B cell (primary cell): ENCODE measurements at regions of chr2 and their contacts with region 1.

Region 1: DNA sequence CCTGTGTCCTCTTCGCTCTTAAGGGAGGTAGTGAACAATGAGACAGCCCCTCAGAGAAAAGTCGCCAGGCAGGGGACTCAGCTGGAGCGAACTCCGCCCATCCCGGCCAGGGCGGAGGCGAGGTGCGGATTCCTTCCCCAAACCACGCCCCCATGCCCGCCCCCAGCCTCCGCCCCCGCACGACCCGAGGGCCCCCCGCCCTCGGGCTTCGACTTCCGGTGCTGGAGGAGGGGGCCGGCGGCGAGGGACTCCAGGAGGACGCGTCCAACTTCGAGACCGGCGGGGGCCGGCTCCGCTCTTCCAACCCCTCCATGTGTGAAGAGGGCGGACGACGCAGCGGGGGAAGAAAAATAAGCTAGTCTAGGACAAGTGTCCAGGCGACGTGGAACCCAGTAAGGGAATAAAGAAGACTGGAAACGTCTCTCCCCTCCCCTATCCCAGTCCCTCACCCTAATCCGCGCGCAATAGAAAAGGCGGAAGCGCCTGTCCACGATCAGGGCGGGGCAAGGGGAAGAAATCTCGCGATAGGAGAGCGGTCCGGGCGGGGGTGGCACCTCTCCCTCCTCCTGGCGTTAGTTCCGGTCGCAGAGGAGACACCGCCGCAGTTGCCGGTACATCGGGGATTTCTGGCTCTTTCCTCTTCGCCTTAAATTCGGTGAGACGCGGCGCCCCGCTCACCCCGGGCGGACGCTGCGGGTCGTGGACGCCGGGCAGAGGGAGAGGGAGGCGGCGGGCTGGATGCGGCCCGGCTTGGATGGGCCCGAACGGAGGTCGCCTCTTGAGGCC is at the start of gene BZW1:
- DNase-seq: peak; percentile 99
- ATAC-seq: peak; percentile 80
- H3K4me3 ChIP-seq: peak within 1 kb of the TSS; percentile 75 to 93 (median 92)
- H3K4me3 Mint-ChIP-seq: peak within 1 kb of the TSS; percentile 94
- H3K27ac ChIP-seq: peak within 1 kb of the TSS; percentile 99
- H3K27ac Mint-ChIP-seq: peak within 1 kb of the TSS; percentile 99
- H3K4me1 ChIP-seq: peaks cover 19 to 24% of the 10 kb centered on the region in 2 donors
- H3K4me1 Mint-ChIP-seq: peaks cover 39% of the 10 kb centered on the region
- H3K27me3 ChIP-seq: no peaks in the 10 kb centered on the region
- H3K27me3 Mint-ChIP-seq: no peaks in the 10 kb centered on the region
- CTCF ChIP-seq: no peak
- total RNA-seq, gene BZW1: 109 and 120 TPM in 2 replicates

Region 2: DNA sequence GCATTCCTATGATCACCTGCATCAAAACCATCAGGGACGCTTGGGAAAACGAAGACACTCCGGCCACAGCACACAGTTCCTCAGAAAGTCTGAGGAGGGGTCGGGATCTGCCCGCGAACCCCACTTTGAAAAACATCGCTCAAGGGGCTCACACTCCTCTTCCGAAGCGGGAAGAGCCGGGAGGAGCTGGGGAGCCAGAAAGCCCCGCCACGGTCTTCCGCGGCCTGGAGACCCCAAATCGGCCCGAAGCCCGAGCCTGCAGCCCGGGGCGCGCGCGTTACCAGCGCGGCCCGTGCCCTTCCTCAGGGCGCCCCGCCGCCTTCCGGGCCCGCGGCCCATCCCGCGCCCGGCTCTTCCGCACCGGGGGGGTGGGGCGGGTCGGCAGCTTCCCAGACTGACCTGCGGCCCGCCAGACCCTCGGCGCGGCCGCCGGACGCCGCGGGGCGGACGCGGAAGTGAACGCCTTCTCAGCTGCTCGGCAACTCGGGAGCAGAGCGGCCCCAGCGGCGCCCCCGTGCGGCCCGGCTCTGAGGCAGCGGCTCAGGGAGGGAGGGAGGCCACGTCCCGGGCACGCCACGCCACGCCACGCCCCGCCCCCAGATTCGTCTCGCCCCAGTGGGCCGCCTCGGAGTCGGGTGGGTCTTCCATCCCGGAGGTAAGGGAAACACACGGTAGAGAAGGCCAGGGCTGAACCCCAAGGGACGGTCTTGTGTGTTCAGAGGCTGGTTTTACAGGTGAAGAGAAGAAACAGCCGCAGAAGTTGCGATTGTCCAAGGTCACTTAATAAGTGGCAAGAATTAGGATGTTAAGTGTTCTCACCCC is 301.7 kb before region 1 on chr2 and contains the start of gene KCTD18:
- CTCF ChIA-PET with region 1: no interaction called
- POLR2A ChIA-PET with region 1: no interaction called
- intact Hi-C with region 1: loop called (anchors 1 kb)
- DNase-seq: peak; percentile 91
- ATAC-seq: peak; percentile 100
- H3K4me3 ChIP-seq: peak within 1 kb of the TSS; percentile 64 to 81 (median 66)
- H3K4me3 Mint-ChIP-seq: peak within 1 kb of the TSS; percentile 95
- H3K27ac ChIP-seq: peak within 1 kb of the TSS; percentile 49 to 79
- H3K27ac Mint-ChIP-seq: peak within 1 kb of the TSS; percentile 92
- H3K4me1 ChIP-seq: peaks cover 15 to 21% of the 10 kb centered on the region in 2 donors
- H3K4me1 Mint-ChIP-seq: peaks cover 28% of the 10 kb centered on the region
- H3K27me3 ChIP-seq: peaks cover 0 to 13% (median 13%) of the 10 kb centered on the region in 4 experiments
- H3K27me3 Mint-ChIP-seq: peaks cover 4% of the 10 kb centered on the region
- CTCF ChIP-seq: peak; percentile 83
- total RNA-seq, gene KCTD18: 20.2 and 21.3 TPM in 2 replicates

Region 3: GRCh38 chr2:200713003-200713703 is 98.4 kb before region 1 on chr2:
- CTCF ChIA-PET with region 1: interaction called, 11 read pairs
- POLR2A ChIA-PET with region 1: interaction called, 9 read pairs
- intact Hi-C with region 1: loop called (anchors 1 kb)
- DNase-seq: peak; percentile 91
- ATAC-seq: peak; percentile 99
- H3K4me3 ChIP-seq: peak overlapping the region in 4 of 5 experiments; percentile 5 to 52 (median 16)
- H3K4me3 Mint-ChIP-seq: peak overlapping the region; percentile 83
- H3K27ac ChIP-seq: peak overlapping the region; percentile 82 to 93
- H3K27ac Mint-ChIP-seq: peak overlapping the region; percentile 98
- H3K4me1 ChIP-seq: peaks cover 5 to 6% of the 10 kb centered on the region in 2 donors
- H3K4me1 Mint-ChIP-seq: peaks cover 15% of the 10 kb centered on the region
- H3K27me3 ChIP-seq: no peaks in the 10 kb centered on the region
- H3K27me3 Mint-ChIP-seq: peaks cover 10% of the 10 kb centered on the region
- CTCF ChIP-seq: peak; percentile 83

Region 4: GRCh38 chr2:200888704-200889625 is 77.4 kb after region 1 on chr2 and contains the starts of genes NIF3L1 and PPIL3:
- CTCF ChIA-PET with region 1: no interaction called
- POLR2A ChIA-PET with region 1: no interaction called
- intact Hi-C with region 1: loop called (anchors 1 kb)
- DNase-seq: peak; percentile 98
- ATAC-seq: peak; percentile 81
- H3K4me3 ChIP-seq: peak within 1 kb of the TSS; percentile 76 to 99 (median 87)
- H3K4me3 Mint-ChIP-seq: peak within 1 kb of the TSS; percentile 95
- H3K27ac ChIP-seq: peak within 1 kb of the TSS; percentile 90 to 93
- H3K27ac Mint-ChIP-seq: peak within 1 kb of the TSS; percentile 98
- H3K4me1 ChIP-seq: peaks cover 15 to 28% of the 10 kb centered on the region in 2 donors
- H3K4me1 Mint-ChIP-seq: peaks cover 43% of the 10 kb centered on the region
- H3K27me3 ChIP-seq: no peaks in the 10 kb centered on the region
- H3K27me3 Mint-ChIP-seq: no peaks in the 10 kb centered on the region
- CTCF ChIP-seq: no peak
- total RNA-seq, gene NIF3L1: 26.7 and 32.9 TPM in 2 replicates
- total RNA-seq, gene PPIL3: 55.5 and 57.9 TPM in 2 replicates

Region 5: GRCh38 chr2:201006704-201007103 is 195.2 kb after region 1 on chr2:
- CTCF ChIA-PET with region 1: no interaction called
- POLR2A ChIA-PET with region 1: no interaction called
- intact Hi-C with region 1: no loop called
- DNase-seq: no peak
- ATAC-seq: no peak
- H3K4me3 ChIP-seq: no peak overlapping the region
- H3K4me3 Mint-ChIP-seq: no peak overlapping the region
- H3K27ac ChIP-seq: no peak overlapping the region
- H3K27ac Mint-ChIP-seq: no peak overlapping the region
- H3K4me1 ChIP-seq: no peaks in the 10 kb centered on the region
- H3K4me1 Mint-ChIP-seq: no peaks in the 10 kb centered on the region
- H3K27me3 ChIP-seq: no peaks in the 10 kb centered on the region
- H3K27me3 Mint-ChIP-seq: no peaks in the 10 kb centered on the region
- CTCF ChIP-seq: no peak

Region 6: GRCh38 chr2:201118121-201118960 is 306.8 kb after region 1 on chr2:
- CTCF ChIA-PET with region 1: no interaction called
- POLR2A ChIA-PET with region 1: interaction called, 3 read pairs
- intact Hi-C with region 1: loop called (anchors 5 kb)
- DNase-seq: peak; percentile 95
- ATAC-seq: peak; percentile 64
- H3K4me3 ChIP-seq: peak overlapping the region; percentile 66 to 100 (median 97)
- H3K4me3 Mint-ChIP-seq: peak overlapping the region; percentile 98
- H3K27ac ChIP-seq: peak overlapping the region; percentile 94 to 96
- H3K27ac Mint-ChIP-seq: peak overlapping the region; percentile 98
- H3K4me1 ChIP-seq: peaks cover 63 to 72% of the 10 kb centered on the region in 2 donors
- H3K4me1 Mint-ChIP-seq: peaks cover 72% of the 10 kb centered on the region
- H3K27me3 ChIP-seq: no peaks in the 10 kb centered on the region
- H3K27me3 Mint-ChIP-seq: no peaks in the 10 kb centered on the region
- CTCF ChIP-seq: peak; percentile 55

Region 7: DNA sequence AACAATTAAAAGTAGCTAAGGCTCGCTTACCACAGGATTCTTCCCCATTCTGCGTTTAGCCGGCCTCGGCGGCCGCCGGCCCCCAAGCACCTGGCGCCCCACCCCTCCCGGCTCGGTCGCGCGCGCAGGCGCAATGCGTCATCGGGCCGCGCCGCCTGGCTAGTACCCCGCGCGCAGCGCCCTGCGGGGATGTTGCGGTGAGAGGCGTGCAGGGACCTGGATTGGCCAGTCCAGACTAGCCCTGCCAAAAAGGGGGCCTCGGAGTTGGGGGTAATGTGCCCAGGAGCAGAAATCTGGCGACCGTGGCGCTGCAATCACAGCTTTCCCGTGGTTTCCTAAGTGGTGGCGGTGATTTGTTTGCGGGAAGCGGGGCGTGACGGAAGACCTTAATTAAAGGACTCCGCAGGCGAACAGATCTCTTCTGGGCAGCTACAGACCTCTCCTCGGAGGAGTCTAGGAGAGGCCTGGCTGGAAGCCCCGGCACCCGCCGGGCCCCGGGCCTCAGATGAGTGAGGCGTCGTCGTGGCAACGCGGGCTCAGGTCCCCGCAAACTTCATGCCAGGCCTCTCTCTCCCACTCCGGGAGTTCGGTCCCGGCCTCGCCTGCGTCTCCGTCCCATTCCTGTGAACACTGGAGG is 831.2 kb after region 1 on chr2:
- CTCF ChIA-PET with region 1: no interaction called
- POLR2A ChIA-PET with region 1: no interaction called
- intact Hi-C with region 1: loop called (anchors 2 kb)
- DNase-seq: peak; percentile 92
- ATAC-seq: peak; percentile 86
- H3K4me3 ChIP-seq: peak overlapping the region; percentile 73 to 100 (median 95)
- H3K4me3 Mint-ChIP-seq: peak overlapping the region; percentile 96
- H3K27ac ChIP-seq: peak overlapping the region; percentile 89 to 93
- H3K27ac Mint-ChIP-seq: peak overlapping the region; percentile 97
- H3K4me1 ChIP-seq: peaks cover 10 to 14% of the 10 kb centered on the region in 2 donors
- H3K4me1 Mint-ChIP-seq: peaks cover 12% of the 10 kb centered on the region
- H3K27me3 ChIP-seq: peaks cover 0 to 2% (median 0%) of the 10 kb centered on the region in 4 experiments
- H3K27me3 Mint-ChIP-seq: peaks cover 7% of the 10 kb centered on the region
- CTCF ChIP-seq: no peak

Region 8: DNA sequence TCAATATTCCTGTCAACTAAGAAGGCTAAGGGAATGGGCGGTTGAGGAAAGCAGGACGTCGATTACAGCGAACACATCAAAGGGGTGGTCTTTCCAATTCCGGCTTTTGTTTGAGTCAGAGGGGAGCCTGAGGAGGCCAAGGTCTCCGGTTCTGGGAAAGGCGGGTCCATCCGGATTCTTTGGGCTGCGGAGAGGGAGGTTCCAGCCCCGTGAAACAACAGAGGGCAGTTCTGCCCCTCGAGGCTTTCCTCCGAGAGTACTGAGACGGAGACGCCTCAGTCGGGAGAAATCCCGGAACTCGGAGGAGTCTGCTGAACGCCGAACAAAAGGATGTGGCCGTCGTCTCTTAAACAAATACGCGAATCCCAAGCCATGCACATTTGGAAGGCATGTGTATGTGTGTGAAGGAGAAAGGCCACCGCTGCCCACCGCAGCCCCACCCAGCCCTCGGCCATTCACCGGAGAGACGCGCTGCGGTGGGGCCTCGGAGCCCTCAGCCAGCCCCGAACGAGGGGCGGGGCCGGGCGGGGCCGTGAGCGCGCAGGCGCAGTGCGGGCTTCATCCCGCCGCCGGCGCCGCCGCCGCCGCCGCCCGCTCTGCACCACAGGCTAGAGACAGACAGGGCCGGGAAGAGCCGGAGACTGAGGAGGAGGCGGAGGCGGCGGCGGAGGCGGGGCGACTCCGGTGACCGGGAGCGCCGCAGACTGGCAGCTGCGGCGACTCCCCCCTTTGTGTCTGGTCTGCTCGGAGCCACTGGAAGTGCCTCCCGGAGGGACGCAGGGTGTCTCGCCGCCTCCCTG is 1564.3 kb after region 1 on chr2 and contains the start of gene BMPR2:
- CTCF ChIA-PET with region 1: no interaction called
- POLR2A ChIA-PET with region 1: no interaction called
- intact Hi-C with region 1: loop called (anchors 5 kb)
- DNase-seq: peak; percentile 91
- ATAC-seq: peak; percentile 78
- H3K4me3 ChIP-seq: peak within 1 kb of the TSS; percentile 72 to 96 (median 91)
- H3K4me3 Mint-ChIP-seq: peak within 1 kb of the TSS; percentile 98
- H3K27ac ChIP-seq: peak within 1 kb of the TSS; percentile 58 to 67
- H3K27ac Mint-ChIP-seq: peak within 1 kb of the TSS; percentile 93
- H3K4me1 ChIP-seq: peaks cover 13 to 24% of the 10 kb centered on the region in 2 donors
- H3K4me1 Mint-ChIP-seq: peaks cover 26% of the 10 kb centered on the region
- H3K27me3 ChIP-seq: no peaks in the 10 kb centered on the region
- H3K27me3 Mint-ChIP-seq: no peaks in the 10 kb centered on the region
- CTCF ChIP-seq: no peak
- total RNA-seq, gene BMPR2: 24.6 and 27.2 TPM in 2 replicates